ENCODE measurements at regions of chr11 and their contacts with region 1.

Region 1: GRCh38 chr11:88357323-88358039 is 19.9 kb upstream of the CTSC start:
- DNase-seq: no peak
- H3K4me3 Mint-ChIP-seq: peak overlapping the region; percentile 73
- H3K27ac Mint-ChIP-seq: peak overlapping the region; percentile 91
- H3K4me1 Mint-ChIP-seq: peaks cover 36% of the 10 kb centered on the region
- H3K27me3 Mint-ChIP-seq: no peaks in the 10 kb centered on the region

Region 2: DNA sequence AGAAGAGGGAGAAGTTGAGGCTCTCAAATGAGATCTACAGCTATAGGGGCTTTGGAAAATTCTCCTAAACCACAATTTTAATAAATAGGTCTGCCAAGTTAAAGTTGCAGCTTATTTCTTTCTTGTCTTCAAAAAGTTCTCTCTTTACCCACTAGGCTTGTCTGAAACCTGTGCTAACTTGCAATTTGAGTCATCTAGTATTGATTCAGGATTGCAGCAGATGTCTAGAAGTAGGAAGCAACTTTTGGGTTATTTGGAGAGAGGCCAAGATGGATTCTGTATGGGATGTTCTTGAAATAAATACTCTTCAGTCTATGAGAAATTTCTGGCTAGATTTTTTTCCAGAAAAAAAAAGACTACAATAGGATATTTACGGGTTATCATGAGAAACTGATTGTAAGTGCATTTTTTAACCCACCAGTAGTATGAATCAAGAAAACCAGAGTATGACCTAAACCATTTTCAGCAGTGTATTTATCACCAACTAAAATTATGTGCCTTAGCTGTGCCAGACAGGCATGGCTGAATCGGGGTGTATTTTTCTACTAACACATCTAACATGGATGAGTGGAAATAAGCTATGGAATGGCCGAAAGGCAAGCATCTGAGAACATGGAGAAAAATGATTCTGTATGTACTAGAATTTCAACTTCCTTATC is 177.4 kb before region 1 on chr11:
- intact Hi-C with region 1: loop called (anchors 1 kb)
- DNase-seq: no peak
- H3K4me3 Mint-ChIP-seq: no peak overlapping the region
- H3K27ac Mint-ChIP-seq: no peak overlapping the region
- H3K4me1 Mint-ChIP-seq: peaks cover 28% of the 10 kb centered on the region
- H3K27me3 Mint-ChIP-seq: peaks cover 20% of the 10 kb centered on the region

Region 3: DNA sequence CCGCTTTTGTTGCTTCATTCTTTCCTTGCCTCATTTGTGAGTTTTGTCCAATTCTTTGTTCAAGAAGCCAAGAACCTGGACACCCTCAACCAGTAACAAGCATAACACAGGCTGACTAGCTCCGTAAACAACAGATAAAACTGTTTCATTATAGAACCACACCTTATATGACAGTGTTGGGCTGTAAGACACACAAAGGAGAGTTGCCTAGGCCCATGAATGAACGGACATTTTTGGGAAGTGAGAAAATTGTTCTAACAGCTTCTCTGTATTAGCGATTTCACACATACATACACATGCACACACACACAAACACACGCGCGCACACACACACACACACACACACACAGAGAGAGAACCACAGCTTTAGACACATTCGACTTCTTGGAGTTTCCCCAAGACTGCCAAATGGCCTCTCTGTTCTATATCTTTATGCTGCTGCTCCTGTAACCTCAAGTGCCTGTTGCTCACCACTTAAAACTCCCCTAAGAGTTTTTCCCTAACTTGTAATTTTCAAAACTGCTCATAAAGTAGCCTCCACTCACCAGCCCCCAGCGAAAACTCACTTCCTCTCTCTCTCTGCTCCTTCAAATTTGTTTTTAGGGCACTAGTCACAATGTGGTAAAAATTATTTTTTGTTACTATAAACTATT is 55.9 kb before region 1 on chr11:
- intact Hi-C with region 1: loop called (anchors 1 kb)
- DNase-seq: peak; percentile 57
- H3K4me3 Mint-ChIP-seq: peak overlapping the region; percentile 44
- H3K27ac Mint-ChIP-seq: peak overlapping the region; percentile 94
- H3K4me1 Mint-ChIP-seq: peaks cover 35% of the 10 kb centered on the region
- H3K27me3 Mint-ChIP-seq: no peaks in the 10 kb centered on the region

Region 4: DNA sequence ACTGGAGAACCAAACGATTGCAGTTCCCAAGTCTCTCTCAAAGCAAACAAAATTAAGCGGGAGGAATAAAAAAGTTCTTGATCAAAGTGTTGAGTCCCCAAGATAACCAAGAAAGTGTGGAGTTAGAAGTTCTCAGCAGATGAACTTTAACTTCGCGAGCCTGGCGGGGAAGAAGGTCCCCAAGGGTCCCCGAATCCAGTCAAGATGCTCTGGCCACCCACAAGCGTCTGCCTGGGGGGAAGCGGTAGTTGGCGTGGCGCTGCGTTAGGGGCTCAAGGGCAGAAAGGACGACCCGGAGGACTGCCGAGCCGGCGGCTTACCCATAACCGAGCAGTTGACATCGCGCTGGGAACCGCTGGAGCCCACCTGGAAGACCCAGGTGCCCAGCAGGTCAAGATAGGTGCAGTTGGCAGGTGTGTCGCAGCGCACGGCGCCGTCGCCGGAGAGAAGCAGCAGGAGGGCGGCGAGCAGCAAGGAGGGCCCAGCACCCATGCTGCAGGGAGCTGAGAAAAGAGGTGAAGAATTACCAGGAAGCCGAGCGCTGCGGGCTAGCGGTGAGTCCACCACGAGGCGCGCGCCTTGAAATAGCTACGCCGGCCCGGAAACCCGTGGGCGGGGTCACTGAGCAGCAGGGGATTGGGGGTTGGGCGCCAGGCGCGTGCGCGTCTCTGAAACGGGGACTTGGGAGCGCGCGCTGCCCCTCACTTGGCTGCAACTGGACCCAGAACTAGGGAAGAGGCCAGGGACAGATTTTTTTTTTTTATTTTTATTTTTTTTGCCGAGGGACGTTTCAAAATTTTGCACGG is 20.1 kb before region 1 on chr11 and contains the start of gene CTSC:
- intact Hi-C with region 1: loop called (anchors 1 kb)
- DNase-seq: peak; percentile 98
- H3K4me3 Mint-ChIP-seq: peak within 1 kb of the TSS; percentile 83
- H3K27ac Mint-ChIP-seq: peak within 1 kb of the TSS; percentile 99
- H3K4me1 Mint-ChIP-seq: peaks cover 40% of the 10 kb centered on the region
- H3K27me3 Mint-ChIP-seq: no peaks in the 10 kb centered on the region
- total RNA-seq, gene CTSC: 67.1 and 71.8 TPM in 2 replicates

Region 5: GRCh38 chr11:88421530-88421929 is 64.0 kb after region 1 on chr11:
- intact Hi-C with region 1: loop called (anchors 1 kb)
- DNase-seq: peak; percentile 83
- H3K4me3 Mint-ChIP-seq: peak overlapping the region; percentile 58
- H3K27ac Mint-ChIP-seq: peak overlapping the region; percentile 71
- H3K4me1 Mint-ChIP-seq: peaks cover 60% of the 10 kb centered on the region
- H3K27me3 Mint-ChIP-seq: no peaks in the 10 kb centered on the region

Region 6: GRCh38 chr11:88535916-88536547 is 178.6 kb after region 1 on chr11:
- intact Hi-C with region 1: loop called (anchors 5 kb)
- DNase-seq: no peak
- H3K4me3 Mint-ChIP-seq: no peak overlapping the region
- H3K27ac Mint-ChIP-seq: no peak overlapping the region
- H3K4me1 Mint-ChIP-seq: peaks cover 13% of the 10 kb centered on the region
- H3K27me3 Mint-ChIP-seq: peaks cover 4% of the 10 kb centered on the region